ENCODE measurements at regions of chr15 and their contacts with region 1.

Region 1: DNA sequence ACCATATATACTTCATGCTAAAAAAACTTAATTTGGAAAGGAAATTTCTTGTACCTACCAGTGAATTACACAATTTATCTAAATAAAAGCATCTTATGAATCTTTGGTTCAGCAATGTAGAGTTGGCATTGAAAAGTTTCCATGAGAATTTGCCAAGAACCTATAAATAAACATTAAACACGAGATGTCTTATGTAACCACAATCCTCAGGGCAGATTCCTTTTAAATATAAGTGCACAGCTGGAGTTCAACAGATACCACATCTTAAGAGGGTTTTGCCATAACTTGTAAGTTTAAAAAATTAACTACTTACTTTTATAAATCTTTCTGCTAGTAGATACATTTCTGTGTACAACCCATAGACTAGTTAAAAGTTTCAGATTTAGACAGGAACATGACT is 499.3 kb upstream of the ARRDC4 start:
- DNase-seq: no peak
- ATAC-seq: no peak
- H3K4me3 ChIP-seq: no peak overlapping the region
- H3K4me3 Mint-ChIP-seq: no peak overlapping the region
- H3K27ac ChIP-seq: no peak overlapping the region
- H3K27ac Mint-ChIP-seq: no peak overlapping the region
- H3K4me1 ChIP-seq: no peaks in the 10 kb centered on the region
- H3K4me1 Mint-ChIP-seq: no peaks in the 10 kb centered on the region
- H3K27me3 ChIP-seq: no peaks in the 10 kb centered on the region
- H3K27me3 Mint-ChIP-seq: no peaks in the 10 kb centered on the region
- CTCF ChIP-seq: no peak

Region 2: GRCh38 chr15:96992817-96993216 is 468.4 kb before region 1 on chr15:
- CTCF ChIA-PET with region 1: no interaction called
- POLR2A ChIA-PET with region 1: no interaction called
- intact Hi-C with region 1: no loop called
- DNase-seq: no peak
- ATAC-seq: no peak
- H3K4me3 ChIP-seq: no peak overlapping the region
- H3K4me3 Mint-ChIP-seq: no peak overlapping the region
- H3K27ac ChIP-seq: no peak overlapping the region
- H3K27ac Mint-ChIP-seq: no peak overlapping the region
- H3K4me1 ChIP-seq: no peaks in the 10 kb centered on the region
- H3K4me1 Mint-ChIP-seq: no peaks in the 10 kb centered on the region
- H3K27me3 ChIP-seq: no peaks in the 10 kb centered on the region
- H3K27me3 Mint-ChIP-seq: no peaks in the 10 kb centered on the region
- CTCF ChIP-seq: no peak

Region 3: GRCh38 chr15:97521381-97522285 is 60.4 kb after region 1 on chr15:
- CTCF ChIA-PET with region 1: no interaction called
- POLR2A ChIA-PET with region 1: no interaction called
- intact Hi-C with region 1: loop called in 1 of 2 experiments (anchors 10 kb)
- DNase-seq: no peak
- ATAC-seq: no peak
- H3K4me3 ChIP-seq: no peak overlapping the region
- H3K4me3 Mint-ChIP-seq: no peak overlapping the region
- H3K27ac ChIP-seq: no peak overlapping the region
- H3K27ac Mint-ChIP-seq: no peak overlapping the region
- H3K4me1 ChIP-seq: no peaks in the 10 kb centered on the region
- H3K4me1 Mint-ChIP-seq: no peaks in the 10 kb centered on the region
- H3K27me3 ChIP-seq: no peaks in the 10 kb centered on the region
- H3K27me3 Mint-ChIP-seq: no peaks in the 10 kb centered on the region
- CTCF ChIP-seq: no peak